Prostate gland (tissue), 2 donors: ENCODE measurements at regions of chr4 and their contacts with region 1.

Region 1: GRCh38 chr4:185142912-185143595 is at the start of gene SLC25A4:
- DNase-seq: peak; percentile 83
- H3K4me3 ChIP-seq: peak within 1 kb of the TSS; percentile 68 to 85
- H3K27ac ChIP-seq: peak within 1 kb of the TSS; percentile 81 to 83
- H3K4me1 ChIP-seq: no peaks in the 10 kb centered on the region
- H3K27me3 ChIP-seq: no peaks in the 10 kb centered on the region
- CTCF ChIP-seq: peak; percentile 24 to 71 (median 48)
- POLR2A ChIP-seq: peak; percentile 93
- total RNA-seq, gene SLC25A4: 46.0 to 105 TPM

Region 2: DNA sequence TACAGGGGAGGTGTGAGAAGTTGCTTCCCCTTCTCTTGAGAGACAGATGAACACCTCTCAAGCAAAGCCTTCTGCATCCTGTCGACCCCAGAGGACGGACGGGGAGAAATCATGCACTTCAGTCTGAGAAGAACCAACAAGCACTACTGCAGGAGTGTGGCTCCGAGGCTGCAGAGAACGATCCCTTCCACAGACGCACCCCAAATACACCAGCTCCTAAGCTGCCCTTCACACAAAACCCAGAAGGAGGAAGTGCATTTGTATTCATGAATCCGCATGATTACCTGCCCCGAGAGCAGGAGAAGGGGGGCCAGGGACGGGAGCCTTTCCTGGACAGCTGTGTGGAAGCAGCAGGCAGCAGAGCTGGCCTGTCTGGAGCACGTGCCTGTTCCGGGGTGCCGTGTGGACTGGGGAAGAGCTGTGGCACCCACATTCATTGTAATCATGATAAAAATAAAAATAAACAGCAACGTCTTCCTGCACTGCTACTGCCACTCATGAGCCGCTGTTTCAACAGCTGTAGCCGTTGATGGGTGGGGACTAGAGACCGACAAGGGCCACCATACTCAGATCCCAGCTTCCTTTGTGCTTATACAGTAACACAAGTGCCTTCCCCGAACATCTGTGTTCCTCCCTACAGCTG is 360.2 kb before region 1 on chr4:
- intact Hi-C with region 1: no loop called
- DNase-seq: no peak
- H3K4me3 ChIP-seq: no peak overlapping the region
- H3K27ac ChIP-seq: no peak overlapping the region
- H3K4me1 ChIP-seq: no peaks in the 10 kb centered on the region
- H3K27me3 ChIP-seq: no peaks in the 10 kb centered on the region
- CTCF ChIP-seq: no peak
- POLR2A ChIP-seq: no peak

Region 3: GRCh38 chr4:184896868-184897715 is 246.0 kb before region 1 on chr4:
- intact Hi-C with region 1: no loop called
- DNase-seq: no peak
- H3K4me3 ChIP-seq: no peak overlapping the region
- H3K27ac ChIP-seq: no peak overlapping the region
- H3K4me1 ChIP-seq: peaks cover 17% of the 10 kb centered on the region
- H3K27me3 ChIP-seq: no peaks in the 10 kb centered on the region
- CTCF ChIP-seq: no peak
- POLR2A ChIP-seq: no peak

Region 4: DNA sequence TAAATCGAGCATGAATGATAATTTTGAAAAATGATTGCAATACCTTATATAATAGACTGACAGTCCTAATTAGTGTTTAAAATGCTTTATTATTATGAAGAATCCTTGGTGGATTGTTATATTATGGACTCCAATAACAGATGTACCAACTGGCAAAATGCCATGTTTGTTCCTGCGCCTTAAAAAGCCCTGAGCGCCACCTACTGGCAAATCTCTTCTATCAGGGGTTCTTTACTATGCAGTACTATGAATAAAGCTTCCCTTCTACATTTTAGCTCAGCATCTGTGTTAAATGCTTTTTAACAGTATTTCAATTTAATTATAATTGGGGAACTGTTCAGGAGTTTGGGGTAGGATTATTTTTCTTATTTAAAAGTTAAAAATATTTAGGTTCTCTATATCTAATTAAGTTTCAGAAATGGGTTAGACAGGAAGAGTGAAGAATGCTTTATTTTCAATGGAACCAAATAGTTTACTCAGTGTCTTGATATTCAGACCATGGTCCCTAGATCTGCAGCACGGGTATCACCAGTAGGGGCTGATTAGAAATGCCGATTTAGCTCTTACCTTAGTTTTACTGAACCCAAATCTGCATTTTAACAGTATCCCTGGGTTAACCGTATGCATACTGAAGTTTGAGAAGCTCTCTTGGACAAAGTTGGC is 40.7 kb after region 1 on chr4:
- intact Hi-C with region 1: loop called (anchors 5 kb)
- DNase-seq: peak; percentile 93
- H3K4me3 ChIP-seq: no peak overlapping the region
- H3K27ac ChIP-seq: no peak overlapping the region
- H3K4me1 ChIP-seq: no peaks in the 10 kb centered on the region
- H3K27me3 ChIP-seq: no peaks in the 10 kb centered on the region
- CTCF ChIP-seq: peak; percentile 66 to 81 (median 77)
- POLR2A ChIP-seq: no peak